Sciatic nerve (tissue), 2 donors: ENCODE measurements at regions of chr6 and their contacts with region 1.

Region 1: DNA sequence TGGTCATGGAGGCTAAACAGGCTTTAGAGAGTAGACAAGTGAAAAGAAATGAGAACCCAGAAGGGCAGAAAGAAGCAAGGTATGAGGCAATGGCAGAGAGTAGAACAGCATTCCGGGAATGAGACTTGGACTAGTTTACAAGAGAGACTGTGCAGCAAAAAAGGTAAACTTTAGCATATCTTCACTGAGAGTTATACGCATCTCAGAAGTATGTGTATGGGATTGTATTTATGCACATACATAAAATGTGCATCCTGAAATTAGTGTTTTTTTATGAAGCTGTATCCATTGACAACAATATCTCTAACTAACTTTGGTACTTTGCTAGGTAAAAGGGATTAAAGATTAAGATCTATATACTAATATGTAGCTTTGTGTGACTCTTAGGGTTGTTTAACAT is 753.6 kb downstream of the BCKDHB start:
- DNase-seq: no peak
- ATAC-seq: no peak

Region 2: DNA sequence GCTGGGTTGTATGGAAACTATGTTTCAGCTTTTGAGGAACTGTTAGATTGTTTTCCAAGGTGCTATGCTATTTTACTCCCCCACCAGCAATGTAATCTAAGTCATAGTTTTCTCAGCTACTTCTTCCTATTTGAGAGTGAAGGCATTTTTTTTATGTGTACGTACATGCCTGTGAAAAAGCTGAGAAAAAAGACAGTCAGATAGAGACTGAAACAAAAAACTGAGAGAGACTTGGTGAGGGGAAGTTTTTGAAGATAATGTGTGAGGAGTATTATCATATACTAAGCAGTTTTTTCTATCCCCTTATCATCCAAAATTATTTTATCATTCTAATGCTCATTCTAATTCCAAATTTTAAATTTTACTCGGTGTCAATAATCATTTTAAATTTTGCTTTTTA is 26.4 kb after region 1 on chr6:
- intact Hi-C with region 1: no loop called
- DNase-seq: no peak
- ATAC-seq: no peak

Region 3: GRCh38 chr6:80903711-80904110 is 43.6 kb after region 1 on chr6:
- intact Hi-C with region 1: loop called (anchors 2 kb)
- DNase-seq: no peak
- ATAC-seq: no peak